Ovary (tissue), 10 donors: ENCODE measurements at regions of chr17 and their contacts with region 1.

Region 1: GRCh38 chr17:50681263-50682210 is 26.2 kb downstream of the ANKRD40 start:
- DNase-seq: peak in 2 of 5 donors; percentile 59 to 71
- H3K4me3 ChIP-seq: no peak overlapping the region
- H3K27ac ChIP-seq: no peak overlapping the region
- H3K4me1 ChIP-seq: peaks cover 9% of the 10 kb centered on the region
- H3K27me3 ChIP-seq: no peaks in the 10 kb centered on the region
- CTCF ChIP-seq: peak in 2 of 3 donors; percentile 63 to 64
- EP300 ChIP-seq: no peak
- POLR2A ChIP-seq: no peak

Region 2: DNA sequence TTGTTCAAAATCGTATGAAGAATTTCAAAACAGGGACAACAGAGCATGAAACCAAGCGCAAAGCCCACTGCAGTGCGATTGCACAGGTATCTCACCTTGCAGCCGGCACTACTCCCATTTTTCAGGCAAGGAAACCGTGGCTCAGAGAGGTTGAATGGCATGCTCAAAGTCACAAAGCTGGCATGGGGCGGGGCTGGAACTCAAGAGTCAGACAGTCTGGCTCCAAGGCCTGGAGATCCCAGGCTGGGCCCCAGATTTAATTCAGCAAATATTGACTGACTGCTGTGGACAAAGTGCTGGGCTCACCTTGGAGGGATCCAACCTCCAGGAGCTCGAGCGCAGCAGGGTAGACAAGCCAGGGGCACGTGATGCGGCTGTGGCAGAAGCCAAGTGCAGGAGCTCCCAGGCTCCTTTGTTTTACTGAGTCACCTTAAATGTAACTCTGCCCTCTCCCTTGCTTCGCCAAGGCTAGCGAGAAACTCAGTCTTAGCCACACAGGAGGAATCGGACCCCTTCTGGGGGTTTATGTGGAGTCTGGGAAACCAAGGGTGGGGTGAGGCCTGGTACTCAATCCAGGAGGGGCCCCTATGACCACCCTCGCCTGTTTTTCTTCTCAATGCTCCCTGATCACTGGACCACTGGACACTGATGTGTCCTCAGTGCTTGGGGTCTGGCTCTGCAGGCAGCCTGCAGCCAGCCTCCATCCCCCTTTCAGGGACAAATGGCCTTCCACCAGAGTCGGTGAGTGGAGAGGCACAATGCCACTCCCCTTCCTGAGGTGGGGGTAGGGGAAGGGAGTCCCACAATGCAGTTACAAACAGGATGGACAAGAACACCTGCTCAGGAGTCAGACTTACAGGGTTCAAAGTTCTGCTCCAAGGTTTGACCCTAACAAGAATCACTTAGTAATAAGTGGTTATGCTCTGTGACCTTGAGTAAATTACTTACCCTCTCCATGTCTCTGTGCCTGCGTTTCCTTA is 138.5 kb before region 1 on chr17:
- intact Hi-C with region 1: no loop called
- DNase-seq: peak in 1 of 5 donors; percentile 38
- H3K4me3 ChIP-seq: no peak overlapping the region
- H3K27ac ChIP-seq: peak overlapping the region in 1 of 2 donors; percentile 77
- H3K4me1 ChIP-seq: peaks cover 9% of the 10 kb centered on the region
- H3K27me3 ChIP-seq: no peaks in the 10 kb centered on the region
- CTCF ChIP-seq: no peak
- EP300 ChIP-seq: no peak
- POLR2A ChIP-seq: no peak

Region 3: DNA sequence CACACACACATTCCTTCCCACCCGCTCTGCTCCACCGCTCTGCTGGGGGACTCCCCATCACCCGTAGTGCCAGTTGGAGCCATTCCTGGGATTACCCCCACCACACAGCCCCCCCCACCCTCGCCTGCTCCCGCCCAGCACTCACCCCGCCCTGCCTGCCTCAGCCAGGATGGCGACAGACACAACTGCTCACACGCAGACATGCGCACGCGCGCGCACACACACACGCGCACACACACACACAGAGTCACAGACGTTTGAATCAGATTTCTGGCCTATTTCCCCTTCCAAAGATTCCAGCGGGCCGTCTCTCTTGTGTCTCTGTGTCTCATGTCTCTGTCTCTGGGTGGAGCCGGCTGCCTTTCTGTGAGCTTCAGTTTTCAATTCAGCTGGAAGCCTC is 116.6 kb before region 1 on chr17:
- intact Hi-C with region 1: no loop called
- DNase-seq: peak; percentile 81 to 87 (median 84)
- H3K4me3 ChIP-seq: no peak overlapping the region
- H3K27ac ChIP-seq: peak overlapping the region in 1 of 2 donors; percentile 76
- H3K4me1 ChIP-seq: peaks cover 10% of the 10 kb centered on the region
- H3K27me3 ChIP-seq: no peaks in the 10 kb centered on the region
- CTCF ChIP-seq: no peak
- EP300 ChIP-seq: no peak
- POLR2A ChIP-seq: no peak

Region 4: GRCh38 chr17:50626037-50626574 is 55.4 kb before region 1 on chr17:
- intact Hi-C with region 1: loop called in 1 of 4 experiments (anchors 10 kb)
- DNase-seq: peak; percentile 74 to 88 (median 83)
- H3K4me3 ChIP-seq: no peak overlapping the region
- H3K27ac ChIP-seq: no peak overlapping the region
- H3K4me1 ChIP-seq: peaks cover 3% of the 10 kb centered on the region
- H3K27me3 ChIP-seq: no peaks in the 10 kb centered on the region
- CTCF ChIP-seq: peak; percentile 75 to 81 (median 77)
- EP300 ChIP-seq: no peak
- POLR2A ChIP-seq: no peak

Region 5: DNA sequence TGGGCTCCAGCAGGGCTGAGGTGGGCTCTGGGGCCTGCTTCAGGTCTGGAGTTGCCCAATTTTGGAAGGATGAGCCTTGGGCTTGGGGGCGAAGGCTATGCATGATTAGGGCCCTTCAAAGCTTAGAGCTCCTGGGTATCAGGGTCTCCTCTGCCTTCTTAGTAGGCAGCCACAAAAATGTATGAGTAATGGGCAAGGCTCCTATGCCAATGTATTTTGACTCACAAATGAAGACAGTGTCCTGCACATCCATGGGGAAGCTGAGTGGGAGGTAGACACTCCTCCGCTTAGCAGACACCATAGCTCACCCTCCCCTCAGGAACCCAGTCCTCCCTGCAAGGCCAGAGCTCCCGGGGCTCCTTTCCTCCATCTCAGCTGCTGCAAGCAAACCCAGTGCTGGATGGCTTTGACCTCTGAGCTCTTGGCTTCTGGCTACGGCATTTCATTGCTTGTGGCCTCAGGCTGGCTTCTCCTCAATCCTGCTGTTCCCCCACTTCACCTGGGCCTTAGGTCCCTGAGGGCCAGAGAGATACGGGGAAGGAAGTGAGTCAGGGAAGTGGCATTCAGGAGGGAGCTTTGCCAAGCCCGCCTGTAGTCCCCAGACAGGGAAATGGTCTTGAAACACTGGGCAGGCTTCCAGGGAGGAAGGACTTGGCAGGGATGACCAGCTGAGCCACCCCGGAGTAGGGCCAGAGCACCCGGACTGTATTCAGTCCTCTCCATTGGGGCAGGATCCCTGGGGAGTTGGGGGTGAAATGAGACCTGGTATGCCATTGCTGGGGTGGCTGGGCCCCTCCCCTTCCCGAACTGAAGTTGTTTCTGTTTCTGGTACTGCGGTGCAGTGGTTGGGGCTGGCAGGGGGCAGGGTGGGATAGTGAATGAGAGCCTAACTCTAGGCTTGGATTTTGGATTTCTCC is 42.4 kb before region 1 on chr17:
- intact Hi-C with region 1: loop called in 2 of 4 experiments (anchors 5 to 10 kb)
- DNase-seq: peak; percentile 91 to 96 (median 94)
- H3K4me3 ChIP-seq: no peak overlapping the region
- H3K27ac ChIP-seq: no peak overlapping the region
- H3K4me1 ChIP-seq: peaks cover 21% of the 10 kb centered on the region
- H3K27me3 ChIP-seq: no peaks in the 10 kb centered on the region
- CTCF ChIP-seq: no peak
- EP300 ChIP-seq: no peak
- POLR2A ChIP-seq: no peak